B cell (primary cell): ENCODE measurements at regions of chr1 and their contacts with region 1.

Region 1: DNA sequence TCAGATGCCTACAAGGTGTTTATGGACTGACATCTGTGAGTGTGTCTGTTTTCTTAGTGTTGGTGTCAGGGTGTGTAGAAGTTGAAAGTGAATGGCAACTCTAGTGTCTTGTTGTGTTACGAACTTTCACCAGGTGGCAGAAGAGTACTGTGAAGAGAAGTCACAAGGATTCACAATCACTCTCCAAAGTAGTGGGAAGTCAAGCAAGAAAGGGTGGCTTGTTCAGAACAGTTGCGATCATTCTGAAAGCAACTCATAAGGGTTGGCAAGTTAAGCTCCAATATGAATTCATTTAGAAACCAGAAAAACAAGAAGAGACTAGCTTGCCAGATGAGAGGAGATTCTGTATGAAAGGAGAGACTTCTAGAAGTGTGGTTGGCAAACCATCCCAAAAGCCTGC is 86.1 kb downstream of the FASLG start:
- DNase-seq: peak; percentile 82
- ATAC-seq: peak; percentile 68
- H3K4me3 ChIP-seq: no peak overlapping the region
- H3K4me3 Mint-ChIP-seq: peak overlapping the region; percentile 61
- H3K27ac ChIP-seq: no peak overlapping the region
- H3K27ac Mint-ChIP-seq: peak overlapping the region; percentile 13
- H3K4me1 ChIP-seq: peaks cover 26 to 27% of the 10 kb centered on the region in 2 donors
- H3K4me1 Mint-ChIP-seq: peaks cover 32% of the 10 kb centered on the region
- H3K27me3 ChIP-seq: peaks cover 0 to 8% (median 0%) of the 10 kb centered on the region in 4 experiments
- H3K27me3 Mint-ChIP-seq: peaks cover 5% of the 10 kb centered on the region
- CTCF ChIP-seq: peak; percentile 83

Region 2: DNA sequence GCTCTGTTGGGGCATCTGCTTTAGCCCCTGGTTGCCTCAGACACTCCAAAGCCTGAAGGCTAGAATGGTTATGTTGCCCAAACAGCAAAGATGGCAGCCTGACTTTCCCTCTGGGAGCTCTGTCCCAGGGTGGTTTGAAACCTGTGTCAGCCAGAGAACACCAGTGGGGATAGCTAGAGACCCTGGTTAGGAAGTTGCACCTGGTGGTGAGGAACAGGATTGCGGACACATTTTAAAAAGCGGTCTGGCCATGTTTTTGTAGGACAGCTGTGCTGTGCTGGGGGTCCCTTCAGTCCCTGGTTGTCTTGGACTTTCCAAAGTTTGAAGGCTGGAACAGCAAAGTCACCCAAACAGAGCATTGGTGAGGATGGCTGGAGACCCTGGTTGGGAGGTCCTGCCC is 815.9 kb before region 1 on chr1:
- CTCF ChIA-PET with region 1: no interaction called
- POLR2A ChIA-PET with region 1: no interaction called
- intact Hi-C with region 1: no loop called
- DNase-seq: no peak
- ATAC-seq: no peak
- H3K4me3 ChIP-seq: no peak overlapping the region
- H3K4me3 Mint-ChIP-seq: no peak overlapping the region
- H3K27ac ChIP-seq: no peak overlapping the region
- H3K27ac Mint-ChIP-seq: no peak overlapping the region
- H3K4me1 ChIP-seq: no peaks in the 10 kb centered on the region
- H3K4me1 Mint-ChIP-seq: no peaks in the 10 kb centered on the region
- H3K27me3 ChIP-seq: no peaks in the 10 kb centered on the region
- H3K27me3 Mint-ChIP-seq: peaks cover 7% of the 10 kb centered on the region
- CTCF ChIP-seq: no peak

Region 3: DNA sequence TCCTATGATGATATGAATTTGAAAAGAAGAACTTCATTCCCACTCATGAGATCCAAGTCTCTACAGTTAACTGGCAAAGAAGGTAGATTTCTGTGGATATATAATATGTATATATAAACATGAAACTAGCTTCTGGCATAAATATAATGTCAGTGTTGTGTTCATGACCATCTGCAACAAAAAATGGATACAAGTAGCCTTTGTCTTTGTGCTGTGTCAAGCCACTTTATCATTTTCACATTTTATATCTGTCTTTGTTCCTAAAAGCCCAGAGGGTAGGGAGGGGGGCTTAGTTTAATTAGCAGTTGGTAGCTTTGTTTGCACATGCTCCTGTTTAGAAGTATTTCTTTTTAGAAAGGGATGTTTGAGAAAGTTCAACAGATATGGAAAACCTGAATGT is 142.3 kb before region 1 on chr1:
- CTCF ChIA-PET with region 1: no interaction called
- POLR2A ChIA-PET with region 1: no interaction called
- intact Hi-C with region 1: no loop called
- DNase-seq: no peak
- ATAC-seq: no peak
- H3K4me3 ChIP-seq: no peak overlapping the region
- H3K4me3 Mint-ChIP-seq: no peak overlapping the region
- H3K27ac ChIP-seq: no peak overlapping the region
- H3K27ac Mint-ChIP-seq: no peak overlapping the region
- H3K4me1 ChIP-seq: no peaks in the 10 kb centered on the region
- H3K4me1 Mint-ChIP-seq: no peaks in the 10 kb centered on the region
- H3K27me3 ChIP-seq: no peaks in the 10 kb centered on the region
- H3K27me3 Mint-ChIP-seq: no peaks in the 10 kb centered on the region
- CTCF ChIP-seq: no peak

Region 4: GRCh38 chr1:172671591-172671990 is 73.4 kb before region 1 on chr1:
- CTCF ChIA-PET with region 1: no interaction called
- POLR2A ChIA-PET with region 1: no interaction called
- intact Hi-C with region 1: no loop called
- DNase-seq: no peak
- ATAC-seq: no peak
- H3K4me3 ChIP-seq: no peak overlapping the region
- H3K4me3 Mint-ChIP-seq: no peak overlapping the region
- H3K27ac ChIP-seq: no peak overlapping the region
- H3K27ac Mint-ChIP-seq: no peak overlapping the region
- H3K4me1 ChIP-seq: no peaks in the 10 kb centered on the region
- H3K4me1 Mint-ChIP-seq: no peaks in the 10 kb centered on the region
- H3K27me3 ChIP-seq: no peaks in the 10 kb centered on the region
- H3K27me3 Mint-ChIP-seq: peaks cover 19% of the 10 kb centered on the region
- CTCF ChIP-seq: no peak

Region 5: GRCh38 chr1:172724765-172725613 is 20.0 kb before region 1 on chr1:
- CTCF ChIA-PET with region 1: interaction called, 19 read pairs
- POLR2A ChIA-PET with region 1: no interaction called
- intact Hi-C with region 1: no loop called
- DNase-seq: peak; percentile 38
- ATAC-seq: peak; percentile 80
- H3K4me3 ChIP-seq: no peak overlapping the region
- H3K4me3 Mint-ChIP-seq: no peak overlapping the region
- H3K27ac ChIP-seq: no peak overlapping the region
- H3K27ac Mint-ChIP-seq: peak overlapping the region; percentile 33
- H3K4me1 ChIP-seq: peaks cover 9 to 12% of the 10 kb centered on the region in 2 donors
- H3K4me1 Mint-ChIP-seq: peaks cover 21% of the 10 kb centered on the region
- H3K27me3 ChIP-seq: no peaks in the 10 kb centered on the region
- H3K27me3 Mint-ChIP-seq: no peaks in the 10 kb centered on the region
- CTCF ChIP-seq: no peak

Region 6: GRCh38 chr1:172789866-172790644 is 45.0 kb after region 1 on chr1:
- CTCF ChIA-PET with region 1: no interaction called
- POLR2A ChIA-PET with region 1: no interaction called
- intact Hi-C with region 1: no loop called
- DNase-seq: no peak
- ATAC-seq: no peak
- H3K4me3 ChIP-seq: no peak overlapping the region
- H3K4me3 Mint-ChIP-seq: no peak overlapping the region
- H3K27ac ChIP-seq: no peak overlapping the region
- H3K27ac Mint-ChIP-seq: no peak overlapping the region
- H3K4me1 ChIP-seq: no peaks in the 10 kb centered on the region
- H3K4me1 Mint-ChIP-seq: no peaks in the 10 kb centered on the region
- H3K27me3 ChIP-seq: no peaks in the 10 kb centered on the region
- H3K27me3 Mint-ChIP-seq: no peaks in the 10 kb centered on the region
- CTCF ChIP-seq: no peak

Region 7: DNA sequence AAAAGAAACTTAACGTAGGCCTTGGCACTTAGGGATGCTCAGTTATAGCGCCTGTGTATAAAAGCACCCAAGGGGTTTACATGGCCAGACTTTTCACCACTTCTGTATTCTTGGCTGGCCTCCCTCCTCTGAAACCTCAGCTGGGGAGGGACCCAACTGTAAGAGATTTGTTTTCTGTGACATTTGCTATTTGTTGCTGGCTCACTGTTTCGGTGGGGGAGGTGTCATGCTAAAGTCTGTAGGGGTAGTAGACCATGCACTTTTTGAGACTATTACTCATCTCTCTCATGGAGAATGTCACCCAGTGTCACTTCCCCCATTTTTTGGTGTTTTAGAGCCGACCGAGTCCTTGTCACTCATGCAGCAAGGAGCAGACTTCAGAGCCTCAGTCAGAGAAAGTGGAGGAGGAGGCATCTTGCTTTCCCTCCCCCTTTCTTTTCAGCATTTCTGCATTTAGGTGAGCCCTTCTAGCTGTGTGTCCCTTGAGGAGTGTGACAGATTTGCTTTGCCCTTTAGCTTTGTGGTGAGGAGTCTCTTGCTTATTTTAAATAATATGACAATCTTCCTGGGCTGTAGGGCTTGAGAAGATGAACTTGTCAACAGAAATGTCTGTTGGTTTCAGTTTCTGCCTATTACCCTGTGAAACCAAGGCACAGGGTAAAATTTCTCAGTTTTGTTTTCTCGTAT is 74.0 kb after region 1 on chr1:
- CTCF ChIA-PET with region 1: interaction called, 122 read pairs
- POLR2A ChIA-PET with region 1: interaction called, 25 read pairs
- intact Hi-C with region 1: loop called (anchors 1 kb)
- DNase-seq: peak; percentile 94
- ATAC-seq: peak; percentile 77
- H3K4me3 ChIP-seq: peak overlapping the region in 4 of 5 experiments; percentile 4 to 37 (median 17)
- H3K4me3 Mint-ChIP-seq: peak overlapping the region; percentile 77
- H3K27ac ChIP-seq: peak overlapping the region; percentile 84 to 93
- H3K27ac Mint-ChIP-seq: peak overlapping the region; percentile 93
- H3K4me1 ChIP-seq: peaks cover 26 to 35% of the 10 kb centered on the region in 2 donors
- H3K4me1 Mint-ChIP-seq: peaks cover 41% of the 10 kb centered on the region
- H3K27me3 ChIP-seq: no peaks in the 10 kb centered on the region
- H3K27me3 Mint-ChIP-seq: no peaks in the 10 kb centered on the region
- CTCF ChIP-seq: no peak

Region 8: GRCh38 chr1:173020138-173020750 is 275.2 kb after region 1 on chr1:
- CTCF ChIA-PET with region 1: interaction called, 17 read pairs
- POLR2A ChIA-PET with region 1: no interaction called
- intact Hi-C with region 1: no loop called
- DNase-seq: peak; percentile 70
- ATAC-seq: peak; percentile 75
- H3K4me3 ChIP-seq: peak overlapping the region in 1 of 5 experiments; percentile 21
- H3K4me3 Mint-ChIP-seq: peak overlapping the region; percentile 75
- H3K27ac ChIP-seq: peak overlapping the region; percentile 84 to 92
- H3K27ac Mint-ChIP-seq: peak overlapping the region; percentile 94
- H3K4me1 ChIP-seq: peaks cover 56 to 62% of the 10 kb centered on the region in 2 donors
- H3K4me1 Mint-ChIP-seq: peaks cover 57% of the 10 kb centered on the region
- H3K27me3 ChIP-seq: no peaks in the 10 kb centered on the region
- H3K27me3 Mint-ChIP-seq: no peaks in the 10 kb centered on the region
- CTCF ChIP-seq: no peak

Region 9: GRCh38 chr1:173409613-173410012 is 664.6 kb after region 1 on chr1:
- CTCF ChIA-PET with region 1: interaction called, 19 read pairs
- POLR2A ChIA-PET with region 1: no interaction called
- intact Hi-C with region 1: no loop called
- DNase-seq: peak; percentile 73
- ATAC-seq: peak; percentile 22
- H3K4me3 ChIP-seq: no peak overlapping the region
- H3K4me3 Mint-ChIP-seq: peak overlapping the region; percentile 64
- H3K27ac ChIP-seq: peak overlapping the region; percentile 89 to 97
- H3K27ac Mint-ChIP-seq: peak overlapping the region; percentile 87
- H3K4me1 ChIP-seq: peaks cover 76 to 88% of the 10 kb centered on the region in 2 donors
- H3K4me1 Mint-ChIP-seq: peaks cover 79% of the 10 kb centered on the region
- H3K27me3 ChIP-seq: no peaks in the 10 kb centered on the region
- H3K27me3 Mint-ChIP-seq: no peaks in the 10 kb centered on the region
- CTCF ChIP-seq: no peak

Region 10: DNA sequence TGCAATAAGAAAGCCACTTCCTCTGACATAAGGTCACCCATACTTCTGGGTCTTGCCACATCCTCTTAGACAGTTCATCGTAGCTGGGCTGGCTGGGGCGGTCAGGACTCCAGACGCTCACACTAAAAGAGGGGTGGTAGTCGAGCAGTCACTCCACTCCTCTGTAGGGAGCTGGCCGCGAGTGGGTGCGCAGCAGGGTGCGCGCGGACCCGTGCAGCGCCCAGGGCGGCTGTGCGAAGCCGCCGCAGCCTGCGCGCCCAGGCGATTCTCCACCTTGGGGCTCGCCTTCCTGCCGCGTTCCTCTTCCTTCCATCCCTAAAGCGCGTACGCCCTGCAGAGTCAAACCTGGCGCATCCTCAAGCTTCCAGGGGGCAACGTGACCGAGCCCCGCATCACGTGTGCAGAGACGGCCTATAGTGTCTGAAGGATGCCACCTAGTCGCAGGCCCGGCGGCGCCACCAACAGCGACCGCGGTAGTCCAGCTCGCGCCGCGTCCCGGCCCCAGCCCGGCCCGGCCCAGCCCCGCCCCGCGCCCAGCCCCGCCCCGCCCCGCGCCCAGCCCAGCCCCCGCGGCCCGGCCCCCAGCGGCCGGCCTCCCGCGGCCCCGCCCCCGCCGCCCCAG is 731.8 kb after region 1 on chr1:
- CTCF ChIA-PET with region 1: interaction called, 6 read pairs
- POLR2A ChIA-PET with region 1: no interaction called
- intact Hi-C with region 1: loop called (anchors 5 kb)
- DNase-seq: peak; percentile 92
- ATAC-seq: peak; percentile 92
- H3K4me3 ChIP-seq: peak overlapping the region; percentile 48 to 96 (median 87)
- H3K4me3 Mint-ChIP-seq: peak overlapping the region; percentile 99
- H3K27ac ChIP-seq: peak overlapping the region; percentile 42 to 82
- H3K27ac Mint-ChIP-seq: peak overlapping the region; percentile 99
- H3K4me1 ChIP-seq: peaks cover 22 to 23% of the 10 kb centered on the region in 2 donors
- H3K4me1 Mint-ChIP-seq: peaks cover 42% of the 10 kb centered on the region
- H3K27me3 ChIP-seq: no peaks in the 10 kb centered on the region
- H3K27me3 Mint-ChIP-seq: no peaks in the 10 kb centered on the region
- CTCF ChIP-seq: no peak

Region 11: GRCh38 chr1:174743654-174744561 is 1998.9 kb after region 1 on chr1:
- CTCF ChIA-PET with region 1: no interaction called
- POLR2A ChIA-PET with region 1: no interaction called
- intact Hi-C with region 1: loop called (anchors 5 kb)
- DNase-seq: peak; percentile 65
- ATAC-seq: peak; percentile 57
- H3K4me3 ChIP-seq: no peak overlapping the region
- H3K4me3 Mint-ChIP-seq: no peak overlapping the region
- H3K27ac ChIP-seq: no peak overlapping the region
- H3K27ac Mint-ChIP-seq: no peak overlapping the region
- H3K4me1 ChIP-seq: peaks cover 0 to 10% of the 10 kb centered on the region in 2 donors
- H3K4me1 Mint-ChIP-seq: peaks cover 36% of the 10 kb centered on the region
- H3K27me3 ChIP-seq: no peaks in the 10 kb centered on the region
- H3K27me3 Mint-ChIP-seq: no peaks in the 10 kb centered on the region
- CTCF ChIP-seq: peak; percentile 84